GM12878 (cell line): ENCODE measurements at regions of chr1 and their contacts with region 1.

Region 1: DNA sequence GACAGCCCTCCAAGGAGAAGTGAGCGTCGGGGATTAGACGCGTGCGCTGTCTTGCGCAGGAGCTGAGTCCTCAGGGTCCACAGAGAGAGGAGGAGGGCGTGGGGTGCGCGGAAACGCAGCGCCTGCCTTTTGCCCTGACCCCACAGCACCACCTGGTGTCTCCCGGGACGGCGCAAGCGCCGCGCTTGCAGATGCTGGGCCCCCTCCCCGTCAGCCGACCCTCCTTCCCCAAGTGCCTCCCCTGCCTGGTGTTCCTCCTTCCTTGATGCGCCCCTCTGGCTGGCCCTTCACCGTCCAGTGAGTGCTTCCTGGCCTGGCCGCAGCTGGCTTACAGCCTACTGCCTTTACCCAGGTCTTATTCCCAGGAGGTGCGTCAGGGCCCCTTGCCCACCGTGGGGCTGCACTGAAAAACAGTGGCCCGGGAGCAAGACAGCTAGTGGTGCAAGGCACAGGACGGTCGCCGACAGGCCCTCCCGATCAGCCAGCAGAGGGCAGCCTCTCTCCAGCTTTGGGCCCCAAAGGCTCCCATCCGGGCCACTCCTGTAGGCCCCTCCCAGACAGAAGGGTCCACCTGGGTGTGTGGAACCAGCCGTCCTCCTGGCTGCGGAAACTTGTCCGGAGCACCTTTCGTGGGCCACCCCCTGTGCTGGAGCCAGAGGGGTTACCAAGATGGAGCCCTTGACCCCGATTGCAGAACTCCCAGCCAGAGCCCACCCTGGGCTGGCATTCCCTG is 12.9 kb upstream of the PHLDA3 start:
- DNase-seq: peak; percentile 41
- ATAC-seq: peak; percentile 90
- H3K4me3 ChIP-seq: no peak overlapping the region; the same call in 1 of the 2 replicates
- H3K27ac ChIP-seq: peak overlapping the region; percentile 78
- H3K4me1 ChIP-seq: peaks cover 41% of the 10 kb centered on the region
- H3K27me3 ChIP-seq: no peaks in the 10 kb centered on the region
- CTCF ChIP-seq: peak; percentile 91 to 97 (median 93)
- EP300 ChIP-seq: no peak
- POLR2A ChIP-seq: no peak
- RAD21 ChIP-seq: peak; percentile 90

Region 2: GRCh38 chr1:201396861-201397464 is 85.0 kb before region 1 on chr1:
- CTCF ChIA-PET with region 1: interaction called, 20 read pairs
- POLR2A ChIA-PET with region 1: interaction called, 3 read pairs
- RAD21 ChIA-PET with region 1: interaction called, 4 read pairs
- SMC1A ChIA-PET with region 1: interaction called, 6 read pairs
- in situ Hi-C with region 1: no loop called
- intact Hi-C with region 1: no loop called
- DNase-seq: no peak
- ATAC-seq: peak; percentile 49
- H3K4me3 ChIP-seq: no peak overlapping the region
- H3K27ac ChIP-seq: no peak overlapping the region
- H3K4me1 ChIP-seq: peaks cover 9% of the 10 kb centered on the region
- H3K27me3 ChIP-seq: no peaks in the 10 kb centered on the region
- CTCF ChIP-seq: no peak
- EP300 ChIP-seq: no peak
- POLR2A ChIP-seq: no peak
- RAD21 ChIP-seq: no peak

Region 3: GRCh38 chr1:201436393-201436792 is 45.5 kb before region 1 on chr1:
- CTCF ChIA-PET with region 1: interaction called, 79 read pairs
- POLR2A ChIA-PET with region 1: interaction called, 5 read pairs
- RAD21 ChIA-PET with region 1: interaction called, 44 read pairs
- SMC1A ChIA-PET with region 1: interaction called, 43 read pairs
- in situ Hi-C with region 1: no loop called
- intact Hi-C with region 1: no loop called
- DNase-seq: no peak
- ATAC-seq: peak; percentile 42; the same call in 2 of the 3 replicates
- H3K4me3 ChIP-seq: no peak overlapping the region
- H3K27ac ChIP-seq: no peak overlapping the region
- H3K4me1 ChIP-seq: peaks cover 3% of the 10 kb centered on the region; the same call in 1 of the 2 replicates
- H3K27me3 ChIP-seq: no peaks in the 10 kb centered on the region
- CTCF ChIP-seq: no peak; a peak in 1 of 6 replicates
- EP300 ChIP-seq: no peak
- POLR2A ChIP-seq: no peak
- RAD21 ChIP-seq: no peak

Region 4: DNA sequence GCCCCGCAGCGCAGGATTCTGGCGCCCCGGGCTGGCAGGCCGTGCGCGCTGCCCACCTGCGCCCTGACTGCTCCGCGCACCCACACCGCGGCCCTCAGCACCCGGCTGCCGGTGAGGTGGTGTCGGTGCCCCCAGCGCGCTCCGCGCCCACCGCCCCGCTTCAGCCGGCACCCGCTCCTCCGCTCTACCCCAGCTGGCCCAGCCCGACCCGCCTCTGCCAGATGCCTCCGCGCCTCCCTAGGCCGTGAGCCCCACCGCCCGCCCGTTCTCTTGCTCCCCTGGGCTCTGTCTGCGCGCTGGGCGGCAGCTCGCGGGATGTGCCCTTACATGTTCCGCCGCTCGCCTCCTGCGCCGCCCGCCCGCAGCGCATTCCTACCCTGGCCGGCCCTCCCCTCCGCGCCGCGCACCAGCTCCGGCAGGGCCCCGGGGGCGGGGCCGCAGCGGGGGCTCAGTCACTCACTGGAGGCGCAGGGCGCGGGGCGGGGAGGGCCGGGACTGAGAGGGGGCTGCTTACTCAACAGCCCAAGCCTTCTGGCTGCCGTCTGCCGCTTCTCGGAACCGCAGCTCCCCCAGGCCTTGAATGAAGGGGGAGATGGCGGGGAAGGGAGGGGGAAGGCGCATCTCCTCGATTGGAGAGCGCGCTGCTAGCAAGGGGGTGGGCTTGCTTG is 12.9 kb before region 1 on chr1 and contains the start of gene PHLDA3:
- CTCF ChIA-PET with region 1: interaction called, 36 read pairs
- POLR2A ChIA-PET with region 1: interaction called, 33 read pairs
- RAD21 ChIA-PET with region 1: interaction called, 45 read pairs
- SMC1A ChIA-PET with region 1: interaction called, 12 read pairs
- in situ Hi-C with region 1: no loop called
- intact Hi-C with region 1: no loop called
- DNase-seq: no peak
- ATAC-seq: peak; percentile 88
- H3K4me3 ChIP-seq: peak within 1 kb of the TSS; percentile 96
- H3K27ac ChIP-seq: peak within 1 kb of the TSS; percentile 67
- H3K4me1 ChIP-seq: peaks cover 11% of the 10 kb centered on the region
- H3K27me3 ChIP-seq: no peaks in the 10 kb centered on the region
- CTCF ChIP-seq: no peak
- EP300 ChIP-seq: 0 out of 4 replicates have a peak, but pooled peaks of 1 of the 2 experiments have one; percentile 17
- POLR2A ChIP-seq: peak; percentile 89
- RAD21 ChIP-seq: no peak
- polyA plus RNA-seq, gene PHLDA3: 0.60 to 2.0 TPM

Region 5: DNA sequence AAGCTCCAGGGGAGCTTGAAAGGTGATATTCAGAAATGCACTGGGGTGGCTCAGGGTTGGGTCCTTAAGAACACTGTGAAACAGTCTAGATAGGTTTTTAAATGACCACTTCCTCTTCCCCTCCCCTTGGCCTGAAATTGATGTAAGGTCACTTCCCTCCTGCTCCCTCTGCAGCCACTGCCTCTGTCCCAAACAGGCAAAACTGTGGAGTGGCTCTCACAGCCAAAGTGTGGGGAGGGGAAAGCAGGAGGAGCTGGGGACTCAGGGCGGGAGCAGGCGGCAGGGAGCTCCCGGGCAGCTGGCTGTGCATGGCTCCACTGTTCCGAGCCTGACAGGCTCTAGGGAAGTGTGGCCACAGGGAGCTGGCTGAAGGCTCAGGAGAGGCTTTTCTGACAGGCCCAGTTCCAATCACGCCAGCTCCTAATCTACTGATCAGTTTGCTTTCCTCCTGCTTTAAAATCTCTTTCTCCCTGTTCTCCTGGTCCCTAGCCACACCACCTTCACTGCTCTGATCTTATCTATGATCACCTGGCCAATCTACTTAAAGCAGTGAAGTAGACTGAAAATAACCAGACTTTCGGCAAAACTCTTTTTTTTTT is 30.1 kb after region 1 on chr1:
- CTCF ChIA-PET with region 1: interaction called, 814 read pairs
- POLR2A ChIA-PET with region 1: interaction called, 68 read pairs
- RAD21 ChIA-PET with region 1: interaction called, 505 read pairs
- SMC1A ChIA-PET with region 1: interaction called, 514 read pairs
- in situ Hi-C with region 1: no loop called
- intact Hi-C with region 1: loop called (anchors 1 kb)
- DNase-seq: peak; percentile 35
- ATAC-seq: peak; percentile 73
- H3K4me3 ChIP-seq: peak overlapping the region; percentile 43; the same call in 1 of the 2 replicates
- H3K27ac ChIP-seq: no peak overlapping the region; the same call in none of the 2 replicates
- H3K4me1 ChIP-seq: peaks cover 42% of the 10 kb centered on the region
- H3K27me3 ChIP-seq: no peaks in the 10 kb centered on the region
- CTCF ChIP-seq: peak in 1 of 3 experiments; percentile 3; a peak in 1 of 6 replicates
- EP300 ChIP-seq: no peak
- POLR2A ChIP-seq: no peak
- RAD21 ChIP-seq: no peak

Region 6: DNA sequence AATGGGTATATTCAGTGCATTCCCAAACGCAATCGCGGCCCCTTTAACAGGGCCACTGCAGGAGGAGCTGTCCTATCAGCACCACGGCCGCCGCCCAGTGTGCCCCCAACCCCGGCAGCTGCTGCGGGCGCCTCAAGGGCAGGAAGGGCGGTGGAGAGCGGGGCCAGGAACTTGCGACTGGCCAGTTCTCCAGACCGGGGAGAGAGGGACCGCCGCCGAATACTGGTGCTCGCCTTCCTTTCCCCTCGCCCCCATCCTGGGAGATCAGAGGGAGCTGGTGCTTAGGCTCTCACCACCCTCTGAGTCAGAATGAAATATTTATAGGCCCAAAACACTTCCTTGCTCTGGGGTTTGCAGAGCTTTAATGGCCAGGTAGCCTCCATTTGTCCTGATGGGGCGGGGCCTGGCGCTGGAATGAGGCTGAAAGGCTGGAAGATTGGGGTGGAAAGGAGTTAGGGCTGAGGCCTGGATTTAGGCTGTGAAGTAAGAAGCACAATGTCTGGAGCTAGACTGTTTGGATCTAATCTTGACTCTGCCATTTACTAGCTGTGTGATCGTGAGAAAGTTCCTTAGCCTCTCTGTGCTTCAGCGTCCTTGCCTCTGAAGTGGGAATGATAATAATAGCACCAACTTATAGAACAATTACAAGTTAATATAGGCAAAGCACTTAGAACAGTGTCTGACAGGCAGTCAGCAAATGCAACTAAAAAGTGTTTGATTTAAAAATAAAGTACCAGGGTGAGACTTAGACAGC is 132.5 kb after region 1 on chr1:
- CTCF ChIA-PET with region 1: no interaction called
- POLR2A ChIA-PET with region 1: no interaction called
- RAD21 ChIA-PET with region 1: no interaction called
- SMC1A ChIA-PET with region 1: no interaction called
- in situ Hi-C with region 1: no loop called
- intact Hi-C with region 1: no loop called
- DNase-seq: no peak
- ATAC-seq: 0 out of 3 replicates have a peak, but pooled peaks have one; percentile 30
- H3K4me3 ChIP-seq: no peak overlapping the region
- H3K27ac ChIP-seq: no peak overlapping the region
- H3K4me1 ChIP-seq: no peaks in the 10 kb centered on the region
- H3K27me3 ChIP-seq: no peaks in the 10 kb centered on the region; a peak in 1 of 4 replicates
- CTCF ChIP-seq: no peak
- EP300 ChIP-seq: no peak
- POLR2A ChIP-seq: no peak
- RAD21 ChIP-seq: no peak

Region 7: DNA sequence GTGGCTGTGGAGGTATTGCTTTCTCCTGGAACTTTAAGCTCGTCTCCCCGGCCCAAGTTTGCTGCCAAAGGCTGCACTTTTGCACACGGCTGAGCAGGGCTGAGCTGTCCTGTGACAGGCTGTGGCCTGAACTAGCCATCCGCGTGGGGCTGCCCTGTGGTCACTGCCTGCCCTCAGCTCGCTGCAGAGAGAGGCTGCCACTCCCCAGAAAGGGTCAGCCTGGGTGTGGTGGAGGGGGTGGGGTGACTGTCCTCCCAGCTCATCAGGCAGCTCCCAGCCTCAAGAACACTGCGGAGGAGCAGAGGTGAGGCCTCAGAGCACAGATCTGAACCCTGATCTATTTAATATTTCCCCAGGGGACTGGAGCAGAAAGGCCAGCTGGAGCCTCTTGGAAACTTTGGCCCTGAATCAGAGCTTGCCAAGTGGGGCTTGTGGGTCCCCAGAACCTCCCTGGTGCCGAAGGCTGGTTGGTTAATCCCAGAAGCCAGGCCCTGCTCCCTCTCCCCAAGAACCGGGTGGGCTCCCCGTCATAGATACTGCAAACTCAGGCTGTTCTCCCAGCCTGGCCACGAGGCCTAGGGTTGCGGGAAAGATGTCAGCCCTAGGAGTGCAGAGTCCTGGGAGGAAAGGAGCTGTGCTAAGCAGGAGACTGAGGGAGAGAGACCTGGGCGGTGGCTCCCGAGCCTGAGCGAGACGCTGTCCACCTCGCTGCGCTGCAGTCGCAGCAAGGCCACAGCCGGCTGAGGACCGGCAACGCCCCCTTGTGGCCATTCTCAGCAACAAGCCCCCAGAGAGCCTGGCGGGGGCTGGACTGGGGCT is 221.9 kb after region 1 on chr1:
- CTCF ChIA-PET with region 1: interaction called, 15 read pairs
- POLR2A ChIA-PET with region 1: no interaction called
- RAD21 ChIA-PET with region 1: interaction called, 8 read pairs
- SMC1A ChIA-PET with region 1: interaction called, 5 read pairs
- in situ Hi-C with region 1: no loop called
- intact Hi-C with region 1: no loop called
- DNase-seq: no peak
- ATAC-seq: peak; percentile 99
- H3K4me3 ChIP-seq: no peak overlapping the region
- H3K27ac ChIP-seq: no peak overlapping the region
- H3K4me1 ChIP-seq: no peaks in the 10 kb centered on the region
- H3K27me3 ChIP-seq: no peaks in the 10 kb centered on the region
- CTCF ChIP-seq: peak; percentile 83 to 93 (median 93)
- EP300 ChIP-seq: no peak
- POLR2A ChIP-seq: no peak
- RAD21 ChIP-seq: peak; percentile 82